Astrocyte of the cerebellum (primary cell): ENCODE measurements at regions of chr18 and their contacts with region 1.

Region 1: GRCh38 chr18:6557053-6557779 is 142.5 kb upstream of the L3MBTL4 start:
- DNase-seq: no peak
- H3K4me3 ChIP-seq: no peak overlapping the region
- CTCF ChIP-seq: no peak

Region 2: GRCh38 chr18:6614952-6615351 is 57.7 kb after region 1 on chr18:
- in situ Hi-C with region 1: loop called (anchors 5 kb)
- DNase-seq: no peak
- H3K4me3 ChIP-seq: no peak overlapping the region
- CTCF ChIP-seq: no peak